CD4-positive, alpha-beta T cell (primary cell): ENCODE measurements at regions of chr6 and their contacts with region 1.

Region 1: DNA sequence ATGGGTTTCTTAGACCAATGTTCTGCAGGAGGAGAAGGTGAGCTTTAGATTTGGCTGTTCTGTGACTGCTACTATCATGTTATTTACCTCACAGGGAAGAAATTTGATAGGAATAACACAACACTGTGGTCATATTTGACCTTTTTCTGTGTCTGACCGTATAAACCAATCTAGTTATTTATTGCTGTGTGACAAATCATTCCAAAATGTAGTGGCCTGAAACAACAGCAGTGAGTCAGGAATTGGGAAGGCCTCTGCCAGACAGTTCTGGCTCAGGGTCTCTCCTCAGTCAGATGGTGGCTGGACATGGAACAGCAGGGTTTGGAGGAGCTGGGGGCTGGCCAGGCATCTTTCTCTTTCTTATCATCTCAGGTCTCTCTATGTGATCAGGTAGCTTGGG is 33.0 kb downstream of the RIPOR2 start:
- DNase-seq: no peak
- ATAC-seq: no peak
- H3K4me3 ChIP-seq: no peak overlapping the region
- H3K4me3 Mint-ChIP-seq: peak overlapping the region; percentile 36
- H3K27ac ChIP-seq: peak overlapping the region; percentile 31 to 39
- H3K27ac Mint-ChIP-seq: peak overlapping the region; percentile 97
- H3K4me1 ChIP-seq: peaks cover 70% of the 10 kb centered on the region
- H3K4me1 Mint-ChIP-seq: peaks cover 99% of the 10 kb centered on the region
- H3K27me3 ChIP-seq: no peaks in the 10 kb centered on the region
- H3K27me3 Mint-ChIP-seq: no peaks in the 10 kb centered on the region
- CTCF ChIP-seq: no peak

Region 2: GRCh38 chr6:24888715-24889370 is 13.9 kb before region 1 on chr6:
- CTCF ChIA-PET with region 1: interaction called, 10 read pairs
- POLR2A ChIA-PET with region 1: interaction called, 11 read pairs
- intact Hi-C with region 1: loop called in 1 of 2 experiments (anchors 1 kb)
- DNase-seq: no peak
- ATAC-seq: peak; percentile 62
- H3K4me3 ChIP-seq: no peak overlapping the region
- H3K4me3 Mint-ChIP-seq: peak overlapping the region; percentile 8
- H3K27ac ChIP-seq: peak overlapping the region in 1 of 2 donors; percentile 30
- H3K27ac Mint-ChIP-seq: peak overlapping the region; percentile 97
- H3K4me1 ChIP-seq: peaks cover 53% of the 10 kb centered on the region
- H3K4me1 Mint-ChIP-seq: peaks cover 93% of the 10 kb centered on the region
- H3K27me3 ChIP-seq: no peaks in the 10 kb centered on the region
- H3K27me3 Mint-ChIP-seq: no peaks in the 10 kb centered on the region
- CTCF ChIP-seq: no peak

Region 3: GRCh38 chr6:24919004-24919892 is 16.5 kb after region 1 on chr6:
- CTCF ChIA-PET with region 1: interaction called, 6 read pairs
- POLR2A ChIA-PET with region 1: interaction called, 68 read pairs
- intact Hi-C with region 1: no loop called
- DNase-seq: peak in 1 of 14 experiments; percentile 37
- ATAC-seq: peak; percentile 33
- H3K4me3 ChIP-seq: peak overlapping the region; percentile 17
- H3K4me3 Mint-ChIP-seq: peak overlapping the region; percentile 81
- H3K27ac ChIP-seq: peak overlapping the region; percentile 38 to 73
- H3K27ac Mint-ChIP-seq: peak overlapping the region; percentile 97
- H3K4me1 ChIP-seq: peaks cover 90% of the 10 kb centered on the region
- H3K4me1 Mint-ChIP-seq: peaks cover 93% of the 10 kb centered on the region
- H3K27me3 ChIP-seq: no peaks in the 10 kb centered on the region
- H3K27me3 Mint-ChIP-seq: no peaks in the 10 kb centered on the region
- CTCF ChIP-seq: no peak